ENCODE measurements at regions of chr3 and their contacts with region 1.

Region 1: DNA sequence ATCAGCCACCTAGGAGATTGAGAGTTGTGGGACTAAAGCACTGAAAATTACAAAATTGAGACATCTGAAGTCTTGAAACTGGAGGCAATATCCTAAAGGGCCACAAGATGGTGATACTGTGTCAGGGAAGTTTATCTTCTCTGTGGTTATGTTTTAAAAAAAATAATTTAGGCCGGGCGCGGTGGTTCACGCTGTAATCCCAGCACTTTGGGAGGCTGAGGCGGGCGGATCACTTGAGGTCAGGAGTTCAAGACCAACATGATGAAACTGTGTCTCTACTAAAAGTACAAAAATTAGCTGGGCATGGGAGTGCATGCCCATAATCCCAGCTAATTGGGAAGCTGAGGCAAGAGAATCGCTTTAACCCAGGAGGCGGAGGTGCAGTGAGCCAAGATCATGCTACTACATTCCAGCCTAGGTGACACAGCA is 17.9 kb upstream of the NIT2 start:
- DNase-seq: peak; percentile 55
- H3K4me3 Mint-ChIP-seq: peak overlapping the region; percentile 18
- H3K27ac Mint-ChIP-seq: no peak overlapping the region
- H3K4me1 Mint-ChIP-seq: peaks cover 13% of the 10 kb centered on the region
- H3K27me3 Mint-ChIP-seq: no peaks in the 10 kb centered on the region

Region 2: GRCh38 chr3:99114565-99115291 is 1201.9 kb before region 1 on chr3:
- CTCF ChIA-PET with region 1: no interaction called
- intact Hi-C with region 1: no loop called
- DNase-seq: no peak
- H3K4me3 Mint-ChIP-seq: no peak overlapping the region
- H3K27ac Mint-ChIP-seq: no peak overlapping the region
- H3K4me1 Mint-ChIP-seq: no peaks in the 10 kb centered on the region
- H3K27me3 Mint-ChIP-seq: peaks cover 2% of the 10 kb centered on the region

Region 3: GRCh38 chr3:99833617-99834205 is 482.9 kb before region 1 on chr3:
- CTCF ChIA-PET with region 1: no interaction called
- intact Hi-C with region 1: loop called (anchors 5 kb)
- DNase-seq: no peak
- H3K4me3 Mint-ChIP-seq: no peak overlapping the region
- H3K27ac Mint-ChIP-seq: no peak overlapping the region
- H3K4me1 Mint-ChIP-seq: peaks cover 12% of the 10 kb centered on the region
- H3K27me3 Mint-ChIP-seq: no peaks in the 10 kb centered on the region

Region 4: DNA sequence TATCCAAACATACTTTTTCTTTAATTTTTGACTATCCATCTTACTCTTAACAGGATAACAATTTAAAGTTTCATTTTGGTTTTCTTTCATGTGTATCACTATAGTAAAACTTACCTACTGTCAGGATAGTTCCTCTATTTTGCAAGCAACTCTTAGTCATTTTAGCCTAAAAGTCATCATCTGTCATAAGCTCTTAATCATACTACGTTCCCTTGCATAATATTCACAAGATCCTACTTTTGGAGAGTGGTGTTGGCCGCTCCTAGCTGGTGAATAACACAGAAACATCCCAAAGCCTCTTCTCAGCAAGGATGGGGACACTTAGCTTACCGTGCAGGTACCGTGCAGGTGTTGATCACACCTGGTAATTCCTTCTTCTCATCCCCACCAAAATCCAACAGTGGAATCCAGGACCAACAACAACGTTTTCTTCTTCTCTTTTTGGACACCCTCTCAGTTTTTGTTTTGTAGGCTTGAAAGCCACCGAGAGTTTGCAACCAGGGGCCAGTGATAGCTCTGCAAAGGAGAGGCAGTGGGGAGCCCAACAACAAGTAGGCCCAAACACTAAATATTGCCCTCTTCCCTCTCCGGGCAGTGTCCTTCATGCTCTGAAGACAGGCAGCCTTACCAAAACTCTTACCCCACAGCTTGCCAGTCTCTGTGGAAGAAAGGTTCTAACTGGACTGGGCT is 202.8 kb before region 1 on chr3:
- CTCF ChIA-PET with region 1: no interaction called
- intact Hi-C with region 1: no loop called
- DNase-seq: no peak
- H3K4me3 Mint-ChIP-seq: no peak overlapping the region
- H3K27ac Mint-ChIP-seq: no peak overlapping the region
- H3K4me1 Mint-ChIP-seq: peaks cover 2% of the 10 kb centered on the region
- H3K27me3 Mint-ChIP-seq: no peaks in the 10 kb centered on the region

Region 5: GRCh38 chr3:100245927-100246326 is 70.7 kb before region 1 on chr3:
- CTCF ChIA-PET with region 1: no interaction called
- intact Hi-C with region 1: no loop called
- DNase-seq: peak; percentile 26
- H3K4me3 Mint-ChIP-seq: no peak overlapping the region
- H3K27ac Mint-ChIP-seq: no peak overlapping the region
- H3K4me1 Mint-ChIP-seq: peaks cover 11% of the 10 kb centered on the region
- H3K27me3 Mint-ChIP-seq: no peaks in the 10 kb centered on the region

Region 6: DNA sequence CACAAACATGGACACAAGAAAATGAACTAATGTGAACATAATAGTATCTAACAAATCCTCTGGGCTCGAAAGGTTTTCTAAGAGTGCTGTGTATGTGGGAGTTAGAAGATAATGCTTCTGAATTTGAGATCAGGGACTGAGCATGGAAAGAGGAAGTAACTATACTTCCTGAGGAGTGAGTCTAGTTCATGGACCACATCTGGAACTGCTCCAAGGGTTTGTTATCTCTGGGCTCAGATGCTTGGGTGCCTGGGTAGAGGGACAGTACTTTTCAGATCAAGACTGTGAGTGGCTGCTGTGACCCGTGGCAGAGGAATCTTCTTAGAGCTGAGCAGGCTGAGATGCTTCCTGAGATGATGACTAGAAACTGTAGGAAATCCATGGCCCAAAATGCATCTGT is 27.3 kb before region 1 on chr3:
- CTCF ChIA-PET with region 1: no interaction called
- intact Hi-C with region 1: no loop called
- DNase-seq: no peak
- H3K4me3 Mint-ChIP-seq: no peak overlapping the region
- H3K27ac Mint-ChIP-seq: no peak overlapping the region
- H3K4me1 Mint-ChIP-seq: no peaks in the 10 kb centered on the region
- H3K27me3 Mint-ChIP-seq: no peaks in the 10 kb centered on the region

Region 7: DNA sequence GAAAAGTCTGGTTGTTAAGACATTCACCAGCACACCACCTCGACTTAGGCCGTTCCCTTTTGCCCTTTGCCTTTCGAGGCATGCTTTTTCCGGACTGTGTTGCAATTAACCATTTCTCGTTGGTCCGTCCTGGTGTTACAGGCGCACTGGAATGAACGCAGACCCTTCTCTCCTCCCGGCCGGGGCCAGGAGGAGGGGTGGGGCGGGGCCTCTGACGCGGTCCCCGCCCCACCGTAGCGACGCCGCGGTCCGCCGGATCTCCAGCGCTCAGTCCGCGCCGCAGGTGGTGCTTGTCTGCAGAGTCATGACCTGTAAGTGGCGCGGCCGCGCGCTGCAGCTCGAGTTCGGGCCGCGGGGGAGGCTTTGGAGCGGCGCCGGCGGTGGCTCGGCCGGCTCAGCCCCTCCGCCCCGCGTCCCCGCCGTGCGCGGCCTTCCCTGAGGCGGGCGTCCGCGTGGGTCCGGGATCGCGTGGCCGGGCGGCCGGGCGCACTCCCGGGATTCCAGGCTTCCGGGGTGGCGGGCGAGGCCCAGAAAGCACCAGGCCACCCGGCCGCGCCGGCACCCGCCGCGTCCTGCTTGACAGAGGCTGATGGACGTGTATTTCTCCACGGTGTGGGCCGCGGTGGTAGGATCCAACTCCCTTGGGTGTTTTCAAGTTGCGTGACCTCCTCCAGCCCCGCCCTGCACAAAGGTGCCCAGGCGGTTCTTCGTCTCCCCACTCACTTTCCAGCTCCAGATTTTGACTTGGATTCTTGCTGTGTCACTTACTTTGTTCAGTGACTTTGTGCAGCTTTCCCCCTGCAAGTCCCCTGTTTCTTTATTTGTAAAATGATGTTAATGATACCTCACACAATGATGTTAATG is 18.1 kb after region 1 on chr3 and contains the start of gene NIT2:
- CTCF ChIA-PET with region 1: interaction called, 7 read pairs
- intact Hi-C with region 1: loop called (anchors 1 kb)
- DNase-seq: peak; percentile 82
- H3K4me3 Mint-ChIP-seq: peak within 1 kb of the TSS; percentile 86
- H3K27ac Mint-ChIP-seq: peak within 1 kb of the TSS; percentile 86
- H3K4me1 Mint-ChIP-seq: peaks cover 26% of the 10 kb centered on the region
- H3K27me3 Mint-ChIP-seq: no peaks in the 10 kb centered on the region
- total RNA-seq, gene NIT2: 69.1 to 76.0 TPM

Region 8: GRCh38 chr3:100590114-100590839 is 273.6 kb after region 1 on chr3:
- CTCF ChIA-PET with region 1: interaction called, 16 read pairs
- intact Hi-C with region 1: loop called (anchors 1 kb)
- DNase-seq: peak; percentile 79
- H3K4me3 Mint-ChIP-seq: peak overlapping the region; percentile 11
- H3K27ac Mint-ChIP-seq: no peak overlapping the region
- H3K4me1 Mint-ChIP-seq: peaks cover 3% of the 10 kb centered on the region
- H3K27me3 Mint-ChIP-seq: no peaks in the 10 kb centered on the region

Region 9: DNA sequence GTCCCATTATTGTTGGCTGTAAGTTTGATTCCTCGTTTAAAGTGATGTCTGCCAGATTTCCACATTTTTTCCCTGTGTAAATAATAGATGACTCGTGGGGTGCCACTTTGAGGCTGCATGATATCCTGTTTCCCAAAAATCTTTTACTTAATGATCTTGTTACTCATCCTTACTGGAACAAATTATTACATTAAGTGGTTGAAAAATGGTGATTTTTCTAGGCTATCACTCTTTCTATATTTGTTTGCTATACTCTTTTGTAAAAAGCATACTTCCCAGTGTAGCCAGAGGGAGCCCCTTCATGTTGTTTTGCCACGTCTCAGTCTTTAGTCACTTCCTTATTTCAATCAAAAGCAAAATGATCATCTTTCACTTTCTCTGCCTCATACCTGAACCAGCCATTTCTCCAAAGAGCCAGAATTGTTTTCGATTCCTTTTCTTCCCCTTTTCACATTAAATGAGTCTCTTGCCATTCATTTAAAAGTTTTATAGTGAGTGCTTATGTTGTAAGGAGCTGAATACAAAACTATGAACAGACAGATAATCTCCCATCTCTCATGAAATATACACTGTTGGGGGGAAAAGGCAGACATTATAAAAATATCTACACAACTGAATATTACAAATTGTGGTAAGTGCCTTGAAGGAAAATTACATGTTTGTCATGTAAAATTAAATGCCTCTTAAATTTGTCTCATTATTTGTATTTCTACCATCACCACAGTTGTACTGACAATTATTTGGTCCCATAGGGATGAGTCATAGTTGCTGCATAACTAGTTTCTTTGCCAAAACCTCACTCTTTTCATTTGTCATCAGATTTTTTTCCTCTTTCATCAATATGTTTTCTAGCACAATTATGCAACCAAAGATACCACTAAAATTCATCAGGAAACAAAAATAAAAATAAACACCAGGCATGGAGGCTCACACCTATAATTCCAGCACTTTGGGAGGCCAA is 334.3 kb after region 1 on chr3:
- CTCF ChIA-PET with region 1: no interaction called
- intact Hi-C with region 1: loop called (anchors 5 kb)
- DNase-seq: peak; percentile 57
- H3K4me3 Mint-ChIP-seq: peak overlapping the region; percentile 30
- H3K27ac Mint-ChIP-seq: peak overlapping the region; percentile 84
- H3K4me1 Mint-ChIP-seq: peaks cover 16% of the 10 kb centered on the region
- H3K27me3 Mint-ChIP-seq: no peaks in the 10 kb centered on the region

Measured in activated naive CD4-positive, alpha-beta T cell treated with anti-CD3 and anti-CD28 coated beads for 36 hours (primary cell).